Mucosa of descending colon (tissue), 3 donors: ENCODE measurements at regions of chr9 and their contacts with region 1.

Region 1: GRCh38 chr9:19456996-19457692 is 48.3 kb downstream of the ACER2 start:
- DNase-seq: peak in 2 of 3 donors; percentile 50 to 72
- ATAC-seq: peak; percentile 98
- H3K4me3 ChIP-seq: no peak overlapping the region
- H3K4me1 ChIP-seq: no peaks in the 10 kb centered on the region
- CTCF ChIP-seq: peak; percentile 87

Region 2: DNA sequence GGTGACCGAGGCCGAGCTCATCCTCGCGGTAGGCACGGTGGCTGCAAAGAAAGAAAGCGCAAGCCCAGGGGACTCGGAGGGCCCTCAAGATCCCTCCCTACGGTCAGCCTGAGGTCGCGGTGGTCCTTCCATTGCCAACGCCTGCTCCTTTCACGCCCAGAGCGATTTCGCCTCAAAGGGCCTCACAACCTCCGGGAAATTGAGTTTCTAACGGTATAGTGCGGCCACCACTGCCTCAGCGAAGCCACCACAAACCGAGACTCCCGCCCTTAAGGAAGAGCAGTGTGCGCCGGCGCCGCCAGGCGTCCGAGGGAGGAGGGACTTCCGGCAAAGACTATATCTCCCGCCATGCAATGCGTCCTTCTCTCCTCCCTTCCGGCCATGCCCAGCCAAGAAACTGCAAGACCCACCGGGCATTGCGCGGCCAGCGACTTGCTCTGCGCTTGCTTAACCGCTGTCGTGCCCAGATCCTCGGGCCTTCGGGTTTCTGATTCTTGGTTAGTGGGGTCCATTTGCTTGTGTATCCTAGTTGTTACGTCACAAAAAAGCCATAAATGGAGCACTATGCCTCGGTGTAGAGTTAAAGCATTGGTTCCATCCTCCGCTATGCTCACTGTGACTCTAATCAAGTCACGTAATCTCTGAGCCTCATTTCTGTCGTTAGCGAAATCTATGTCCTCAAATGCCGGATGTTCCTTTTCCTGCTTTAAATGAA is 354.4 kb before region 1 on chr9 and contains the start of gene HAUS6:
- intact Hi-C with region 1: loop called in 1 of 2 experiments (anchors 5 kb)
- DNase-seq: peak; percentile 96 to 98 (median 97)
- ATAC-seq: peak; percentile 100
- H3K4me3 ChIP-seq: peak within 1 kb of the TSS; percentile 75
- H3K4me1 ChIP-seq: peaks cover 8% of the 10 kb centered on the region
- CTCF ChIP-seq: peak; percentile 47
- total RNA-seq, gene HAUS6: 4.8 to 9.6 (median 8.8) TPM

Region 3: GRCh38 chr9:19379697-19380046 is 77.5 kb before region 1 on chr9:
- intact Hi-C with region 1: loop called in 1 of 2 experiments (anchors 5 kb)
- DNase-seq: peak in 2 of 3 donors; percentile 46 to 70
- ATAC-seq: peak; percentile 57
- H3K4me3 ChIP-seq: peak overlapping the region; percentile 52
- H3K4me1 ChIP-seq: peaks cover 19% of the 10 kb centered on the region
- CTCF ChIP-seq: no peak